ENCODE measurements at regions of chr6 and their contacts with region 1.

Region 1: DNA sequence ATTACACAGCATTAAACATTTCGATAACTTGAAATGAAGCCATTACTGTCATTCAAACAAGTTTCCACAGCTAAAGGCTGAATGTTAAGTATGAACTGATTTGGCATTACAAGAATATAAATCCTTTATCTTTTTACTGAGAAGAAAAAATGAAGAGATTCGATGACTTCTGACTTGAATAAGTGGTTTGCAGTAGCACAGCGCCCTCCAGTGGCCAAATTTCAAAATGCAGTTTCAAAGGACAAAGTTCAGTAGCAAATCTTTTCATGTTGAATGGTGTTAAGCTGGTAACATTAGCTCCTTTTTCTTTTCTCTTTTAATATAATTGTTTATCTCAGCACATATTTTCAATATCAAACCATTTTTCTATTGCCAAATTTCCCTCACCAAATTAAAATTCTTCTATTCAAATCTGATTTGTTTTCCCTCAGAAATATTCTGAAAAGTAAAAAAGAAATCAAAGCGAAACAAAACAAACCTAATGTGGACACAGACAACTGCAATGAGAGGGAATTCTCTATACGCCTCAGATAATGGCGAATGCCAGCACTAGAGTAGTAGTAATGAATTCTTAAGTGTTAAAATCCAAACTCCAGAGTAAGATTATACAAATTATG is 145.7 kb downstream of the BTBD9 start:
- DNase-seq: peak; percentile 36 to 78 (median 68)
- ATAC-seq: peak; percentile 70
- H3K4me3 ChIP-seq: no peak overlapping the region
- H3K4me3 Mint-ChIP-seq: no peak overlapping the region
- H3K27ac ChIP-seq: no peak overlapping the region
- H3K27ac Mint-ChIP-seq: no peak overlapping the region
- H3K4me1 ChIP-seq: no peaks in the 10 kb centered on the region
- H3K4me1 Mint-ChIP-seq: peaks cover 0 to 5% (median 4%) of the 10 kb centered on the region in 7 donors
- H3K27me3 ChIP-seq: no peaks in the 10 kb centered on the region
- H3K27me3 Mint-ChIP-seq: no peaks in the 10 kb centered on the region

Region 2: DNA sequence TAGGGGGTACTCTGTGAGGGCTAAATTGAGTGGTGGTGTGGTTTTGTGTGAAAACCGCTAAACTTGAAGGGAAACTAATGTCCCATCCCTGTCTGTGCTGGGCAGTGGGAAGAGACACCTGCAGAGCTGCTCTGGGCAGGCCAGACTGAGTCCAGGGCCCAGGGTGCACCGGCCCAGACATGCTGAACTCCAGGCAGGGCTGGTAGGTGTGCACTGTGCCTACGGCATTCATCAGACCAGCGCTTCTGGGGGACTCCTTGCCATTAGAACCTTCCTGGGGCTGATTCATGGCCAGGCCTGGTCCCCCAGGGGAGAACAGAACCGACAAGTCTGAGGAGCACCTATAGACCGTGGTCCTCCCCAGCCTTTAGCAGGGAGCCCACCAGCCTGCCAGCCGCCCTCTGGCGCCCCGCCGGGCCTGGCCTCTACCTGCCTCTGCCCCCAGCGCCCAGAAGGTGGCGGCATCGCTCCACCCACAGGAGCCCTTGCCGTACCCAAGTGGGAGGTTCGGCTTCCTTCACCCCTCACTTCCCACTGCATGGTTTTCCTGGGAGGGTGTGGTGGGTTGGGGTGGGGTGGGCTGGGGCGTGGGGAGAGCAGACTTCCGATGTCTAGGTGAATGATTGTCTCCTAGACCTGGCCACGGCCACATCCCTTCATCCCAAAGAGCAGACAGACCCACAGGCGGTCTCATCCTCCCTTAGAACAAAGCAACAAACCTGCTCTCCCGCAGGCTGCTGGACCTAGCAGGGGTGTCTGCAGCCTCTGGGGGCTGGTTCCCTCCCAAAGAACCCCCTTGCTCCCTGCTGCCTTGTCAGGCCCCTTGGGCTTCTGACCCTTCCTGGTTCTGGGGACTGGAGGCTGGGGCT is 1009.9 kb before region 1 on chr6:
- CTCF ChIA-PET with region 1: no interaction called
- POLR2A ChIA-PET with region 1: no interaction called
- intact Hi-C with region 1: loop called in 1 of 2 experiments (anchors 5 kb)
- DNase-seq: peak; percentile 56 to 85 (median 70)
- ATAC-seq: peak; percentile 85
- H3K4me3 ChIP-seq: no peak overlapping the region
- H3K4me3 Mint-ChIP-seq: no peak overlapping the region
- H3K27ac ChIP-seq: no peak overlapping the region
- H3K27ac Mint-ChIP-seq: peak overlapping the region in 2 of 9 donors; percentile 25 to 36
- H3K4me1 ChIP-seq: peaks cover 9 to 16% of the 10 kb centered on the region in 2 donors
- H3K4me1 Mint-ChIP-seq: peaks cover 13 to 35% (median 20%) of the 10 kb centered on the region in 7 donors
- H3K27me3 ChIP-seq: no peaks in the 10 kb centered on the region
- H3K27me3 Mint-ChIP-seq: no peaks in the 10 kb centered on the region

Region 3: DNA sequence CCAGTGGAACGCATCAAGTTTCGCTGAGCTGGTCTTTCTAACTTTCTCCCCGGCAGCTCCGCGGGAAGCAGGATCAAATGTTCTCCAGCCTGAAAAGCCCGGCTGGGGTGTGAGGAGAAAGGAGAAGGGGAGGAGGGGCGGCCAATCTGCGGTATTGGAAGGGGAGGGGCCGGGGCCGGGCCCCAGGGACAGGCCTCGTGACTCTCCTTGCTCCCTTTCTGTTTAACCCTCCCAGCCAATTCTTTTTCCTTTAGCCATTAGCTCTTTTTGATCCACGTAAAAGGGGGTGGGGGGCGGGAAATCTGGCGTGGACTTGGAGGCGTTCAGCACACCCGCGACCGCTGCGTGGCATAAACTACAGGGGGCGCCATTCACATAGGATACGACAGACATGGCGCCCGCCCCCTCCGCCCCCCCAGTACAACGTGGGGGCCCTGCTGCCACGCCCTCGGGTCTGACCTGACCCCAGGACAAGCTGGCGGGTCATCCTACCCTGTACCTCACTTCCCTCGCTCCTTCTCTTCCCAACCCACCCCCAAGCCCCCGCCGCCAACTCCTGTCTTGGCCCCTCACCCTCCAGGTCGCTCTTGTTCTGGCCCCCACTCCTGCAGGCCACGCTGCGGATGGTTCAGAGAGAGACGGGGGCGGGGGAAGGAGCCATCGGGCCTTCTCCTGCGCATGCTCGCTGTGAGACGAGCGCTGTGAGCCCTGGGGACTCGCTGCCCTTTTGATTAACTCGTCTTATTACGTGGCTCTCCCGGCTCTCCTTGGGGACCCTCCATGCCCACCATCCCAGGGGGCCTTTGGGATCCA is 788.6 kb before region 1 on chr6:
- CTCF ChIA-PET with region 1: no interaction called
- POLR2A ChIA-PET with region 1: no interaction called
- intact Hi-C with region 1: loop called (anchors 1 to 2 kb)
- DNase-seq: peak; percentile 37 to 82 (median 78)
- ATAC-seq: peak; percentile 86
- H3K4me3 ChIP-seq: peak overlapping the region; percentile 60
- H3K4me3 Mint-ChIP-seq: peak overlapping the region; percentile 79 to 90 (median 86)
- H3K27ac ChIP-seq: peak overlapping the region; percentile 46
- H3K27ac Mint-ChIP-seq: peak overlapping the region; percentile 55 to 91 (median 82)
- H3K4me1 ChIP-seq: peaks cover 5 to 6% of the 10 kb centered on the region in 2 donors
- H3K4me1 Mint-ChIP-seq: peaks cover 10 to 17% (median 14%) of the 10 kb centered on the region in 7 donors
- H3K27me3 ChIP-seq: no peaks in the 10 kb centered on the region
- H3K27me3 Mint-ChIP-seq: peaks cover 0 to 39% (median 0%) of the 10 kb centered on the region in 5 donors

Region 4: GRCh38 chr6:38034274-38034914 is 459.6 kb before region 1 on chr6:
- CTCF ChIA-PET with region 1: no interaction called
- POLR2A ChIA-PET with region 1: no interaction called
- intact Hi-C with region 1: loop called (anchors 1 to 5 kb)
- DNase-seq: peak in 1 of 9 donors; percentile 8
- ATAC-seq: no peak
- H3K4me3 ChIP-seq: no peak overlapping the region
- H3K4me3 Mint-ChIP-seq: peak overlapping the region in 6 of 10 donors; percentile 8 to 54 (median 23)
- H3K27ac ChIP-seq: no peak overlapping the region
- H3K27ac Mint-ChIP-seq: peak overlapping the region in 3 of 9 donors; percentile 29 to 57 (median 52)
- H3K4me1 ChIP-seq: peaks cover 0 to 12% of the 10 kb centered on the region in 2 donors
- H3K4me1 Mint-ChIP-seq: peaks cover 22 to 82% (median 61%) of the 10 kb centered on the region in 7 donors
- H3K27me3 ChIP-seq: no peaks in the 10 kb centered on the region
- H3K27me3 Mint-ChIP-seq: no peaks in the 10 kb centered on the region

Measured in naive thymus-derived CD4-positive, alpha-beta T cell (primary cell).